ENCODE measurements at regions of chr4 and their contacts with region 1.

Region 1: GRCh38 chr4:99293357-99293756 is 2.6 kb upstream of the ADH1A start:
- DNase-seq: no peak

Region 2: GRCh38 chr4:99330648-99331047 is 37.3 kb after region 1 on chr4:
- in situ Hi-C with region 1: no loop called
- DNase-seq: no peak

Region 3: GRCh38 chr4:99383833-99384392 is 90.6 kb after region 1 on chr4:
- in situ Hi-C with region 1: loop called (anchors 10 kb)
- DNase-seq: no peak

Region 4: DNA sequence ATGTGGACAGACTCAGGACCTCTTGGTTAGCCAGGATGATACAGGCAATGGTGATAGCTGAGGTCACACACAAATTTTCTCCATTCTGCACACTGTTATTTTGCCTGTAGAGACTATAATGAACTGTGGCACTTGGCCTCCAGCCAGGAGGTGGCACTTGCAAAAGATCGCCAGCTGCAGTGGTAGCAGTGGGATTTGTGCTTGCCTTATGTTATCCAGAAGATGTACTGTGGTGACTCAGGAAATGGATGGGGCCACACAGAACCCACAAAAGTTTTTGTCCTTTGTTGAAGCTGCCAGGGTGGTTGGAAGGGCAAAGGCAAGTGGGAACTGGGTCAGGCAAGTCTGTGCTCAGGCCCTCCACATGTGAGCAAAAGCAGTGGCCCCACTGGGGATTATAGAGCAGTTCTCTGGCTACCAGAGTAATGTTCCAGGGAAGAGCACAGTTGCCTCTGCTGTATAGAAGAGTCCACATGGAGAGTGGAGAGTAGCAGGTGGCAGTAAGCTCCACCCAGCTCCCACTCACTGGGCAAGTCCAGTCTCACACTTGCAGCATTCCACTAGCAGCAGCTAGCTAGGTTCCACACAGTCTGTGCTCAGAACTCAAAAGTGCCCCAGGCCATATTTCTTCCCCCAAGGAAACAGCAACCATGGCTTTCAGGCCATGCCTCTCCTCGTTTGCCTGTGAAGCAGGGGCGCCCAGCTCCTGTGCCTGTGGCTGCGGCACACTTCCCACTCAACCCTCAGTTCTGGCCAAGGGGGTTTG is 211.6 kb after region 1 on chr4:
- in situ Hi-C with region 1: no loop called
- DNase-seq: no peak

Measured in G401 (cell line).